T-cell (primary cell): ENCODE measurements at regions of chr13 and their contacts with region 1.

Region 1: DNA sequence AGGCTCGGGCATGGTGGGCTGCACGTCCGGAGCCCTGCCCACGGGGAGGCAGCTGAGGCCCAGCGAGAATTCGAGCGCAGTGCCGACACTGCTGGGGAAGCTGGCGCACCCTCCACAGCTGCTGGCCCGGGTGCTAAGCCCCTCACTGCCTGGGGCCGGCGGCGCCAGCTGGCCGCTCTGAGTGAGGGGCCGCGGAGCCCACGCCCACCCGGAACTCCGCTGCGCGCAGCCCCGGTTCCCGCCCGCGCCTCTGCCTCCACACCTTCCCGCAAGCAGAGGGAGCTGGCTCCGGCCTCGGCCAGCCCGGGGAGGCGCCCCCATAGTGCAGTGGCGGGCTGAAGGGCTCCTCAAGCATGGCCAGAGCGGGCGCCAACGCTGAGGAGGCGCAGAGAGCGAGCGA is 2080.4 kb downstream of the PCDH9 start:
- DNase-seq: no peak
- ATAC-seq: no peak
- H3K4me3 ChIP-seq: no peak overlapping the region
- H3K4me3 Mint-ChIP-seq: no peak overlapping the region
- H3K27ac ChIP-seq: no peak overlapping the region
- H3K27ac Mint-ChIP-seq: no peak overlapping the region
- H3K4me1 ChIP-seq: no peaks in the 10 kb centered on the region
- H3K4me1 Mint-ChIP-seq: no peaks in the 10 kb centered on the region
- H3K27me3 ChIP-seq: no peaks in the 10 kb centered on the region
- H3K27me3 Mint-ChIP-seq: no peaks in the 10 kb centered on the region

Region 2: DNA sequence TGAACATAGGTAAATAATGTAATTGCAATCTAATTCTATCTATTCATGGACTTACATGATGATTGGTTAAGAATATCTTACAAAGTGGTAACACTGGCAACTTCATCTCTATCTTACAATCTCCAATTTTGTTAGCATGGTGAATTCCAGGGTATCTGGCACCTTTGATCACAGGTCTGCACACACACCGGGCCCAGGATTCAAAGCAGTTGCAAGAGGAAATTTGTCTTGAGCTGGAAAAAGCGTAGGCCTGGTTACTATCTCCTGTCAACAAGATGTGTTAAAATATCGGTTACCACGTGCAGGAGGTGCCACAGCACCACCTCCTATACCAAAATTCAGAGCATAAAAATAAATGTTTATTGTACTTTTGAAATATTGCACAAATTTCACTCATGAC is 347.9 kb before region 1 on chr13:
- CTCF ChIA-PET with region 1: interaction called in 1 of 2 experiments, 10 read pairs
- POLR2A ChIA-PET with region 1: no interaction called
- DNase-seq: no peak
- ATAC-seq: no peak
- H3K4me3 ChIP-seq: no peak overlapping the region
- H3K4me3 Mint-ChIP-seq: no peak overlapping the region
- H3K27ac ChIP-seq: no peak overlapping the region
- H3K27ac Mint-ChIP-seq: no peak overlapping the region
- H3K4me1 ChIP-seq: no peaks in the 10 kb centered on the region
- H3K4me1 Mint-ChIP-seq: no peaks in the 10 kb centered on the region
- H3K27me3 ChIP-seq: no peaks in the 10 kb centered on the region
- H3K27me3 Mint-ChIP-seq: no peaks in the 10 kb centered on the region

Region 3: DNA sequence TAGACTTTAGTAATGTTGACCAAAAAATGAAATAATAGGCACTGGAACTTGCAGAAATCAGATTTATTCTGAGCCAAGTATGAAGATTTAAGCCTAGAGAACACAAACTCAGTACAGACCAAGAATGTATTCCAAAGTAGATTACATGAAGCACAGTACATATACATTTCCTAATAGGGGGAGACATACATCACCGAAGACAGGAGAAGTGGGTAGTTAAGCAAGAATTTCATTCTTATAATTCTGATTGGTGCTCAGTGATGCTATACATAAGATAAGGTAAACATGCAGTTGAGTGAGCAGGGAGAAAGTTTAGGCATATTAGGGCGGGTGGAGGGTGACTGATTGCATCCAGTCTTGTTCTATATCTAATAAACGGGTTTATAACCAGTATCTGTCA is 138.3 kb before region 1 on chr13:
- CTCF ChIA-PET with region 1: no interaction called
- POLR2A ChIA-PET with region 1: no interaction called
- DNase-seq: no peak
- ATAC-seq: no peak
- H3K4me3 ChIP-seq: no peak overlapping the region
- H3K4me3 Mint-ChIP-seq: no peak overlapping the region
- H3K27ac ChIP-seq: no peak overlapping the region
- H3K27ac Mint-ChIP-seq: no peak overlapping the region
- H3K4me1 ChIP-seq: no peaks in the 10 kb centered on the region
- H3K4me1 Mint-ChIP-seq: no peaks in the 10 kb centered on the region
- H3K27me3 ChIP-seq: no peaks in the 10 kb centered on the region
- H3K27me3 Mint-ChIP-seq: no peaks in the 10 kb centered on the region

Region 4: GRCh38 chr13:65188721-65189120 is 39.0 kb after region 1 on chr13:
- CTCF ChIA-PET with region 1: no interaction called
- POLR2A ChIA-PET with region 1: no interaction called
- DNase-seq: no peak
- ATAC-seq: no peak
- H3K4me3 ChIP-seq: no peak overlapping the region
- H3K4me3 Mint-ChIP-seq: no peak overlapping the region
- H3K27ac ChIP-seq: no peak overlapping the region
- H3K27ac Mint-ChIP-seq: no peak overlapping the region
- H3K4me1 ChIP-seq: no peaks in the 10 kb centered on the region
- H3K4me1 Mint-ChIP-seq: no peaks in the 10 kb centered on the region
- H3K27me3 ChIP-seq: no peaks in the 10 kb centered on the region
- H3K27me3 Mint-ChIP-seq: no peaks in the 10 kb centered on the region

Region 5: GRCh38 chr13:65435590-65435989 is 285.9 kb after region 1 on chr13:
- CTCF ChIA-PET with region 1: no interaction called
- POLR2A ChIA-PET with region 1: no interaction called
- DNase-seq: no peak
- ATAC-seq: no peak
- H3K4me3 ChIP-seq: no peak overlapping the region
- H3K4me3 Mint-ChIP-seq: no peak overlapping the region
- H3K27ac ChIP-seq: no peak overlapping the region
- H3K27ac Mint-ChIP-seq: no peak overlapping the region
- H3K4me1 ChIP-seq: no peaks in the 10 kb centered on the region
- H3K4me1 Mint-ChIP-seq: no peaks in the 10 kb centered on the region
- H3K27me3 ChIP-seq: no peaks in the 10 kb centered on the region
- H3K27me3 Mint-ChIP-seq: no peaks in the 10 kb centered on the region